ENCODE measurements at regions of chr4 and their contacts with region 1.

Region 1: GRCh38 chr4:142353149-142353738 is 492.9 kb downstream of the INPP4B start:
- DNase-seq: no peak
- ATAC-seq: peak; percentile 20
- H3K4me3 Mint-ChIP-seq: peak overlapping the region; percentile 37
- H3K27ac Mint-ChIP-seq: peak overlapping the region; percentile 97
- H3K4me1 Mint-ChIP-seq: peaks cover 97% of the 10 kb centered on the region
- H3K27me3 Mint-ChIP-seq: no peaks in the 10 kb centered on the region

Region 2: GRCh38 chr4:141614878-141615586 is 738.2 kb before region 1 on chr4:
- CTCF ChIA-PET with region 1: no interaction called
- POLR2A ChIA-PET with region 1: no interaction called
- intact Hi-C with region 1: no loop called
- DNase-seq: no peak
- ATAC-seq: no peak
- H3K4me3 Mint-ChIP-seq: no peak overlapping the region
- H3K27ac Mint-ChIP-seq: no peak overlapping the region
- H3K4me1 Mint-ChIP-seq: no peaks in the 10 kb centered on the region
- H3K27me3 Mint-ChIP-seq: peaks cover 3% of the 10 kb centered on the region

Region 3: GRCh38 chr4:142126890-142127497 is 226.2 kb before region 1 on chr4:
- CTCF ChIA-PET with region 1: no interaction called
- POLR2A ChIA-PET with region 1: no interaction called
- intact Hi-C with region 1: loop called (anchors 5 kb)
- DNase-seq: peak; percentile 75
- ATAC-seq: peak; percentile 74
- H3K4me3 Mint-ChIP-seq: no peak overlapping the region
- H3K27ac Mint-ChIP-seq: no peak overlapping the region
- H3K4me1 Mint-ChIP-seq: peaks cover 32% of the 10 kb centered on the region
- H3K27me3 Mint-ChIP-seq: no peaks in the 10 kb centered on the region

Region 4: GRCh38 chr4:142372530-142373260 is 19.5 kb after region 1 on chr4:
- CTCF ChIA-PET with region 1: interaction called, 94 read pairs
- POLR2A ChIA-PET with region 1: no interaction called
- intact Hi-C with region 1: loop called (anchors 1 to 2 kb)
- DNase-seq: no peak
- ATAC-seq: peak; percentile 21
- H3K4me3 Mint-ChIP-seq: peak overlapping the region; percentile 35
- H3K27ac Mint-ChIP-seq: peak overlapping the region; percentile 79
- H3K4me1 Mint-ChIP-seq: peaks cover 76% of the 10 kb centered on the region
- H3K27me3 Mint-ChIP-seq: no peaks in the 10 kb centered on the region

Region 5: GRCh38 chr4:142416711-142417275 is 63.5 kb after region 1 on chr4:
- CTCF ChIA-PET with region 1: interaction called, 10 read pairs
- POLR2A ChIA-PET with region 1: no interaction called
- intact Hi-C with region 1: no loop called
- DNase-seq: no peak
- ATAC-seq: peak; percentile 92
- H3K4me3 Mint-ChIP-seq: peak overlapping the region; percentile 57
- H3K27ac Mint-ChIP-seq: peak overlapping the region; percentile 98
- H3K4me1 Mint-ChIP-seq: peaks cover 81% of the 10 kb centered on the region
- H3K27me3 Mint-ChIP-seq: no peaks in the 10 kb centered on the region

Region 6: DNA sequence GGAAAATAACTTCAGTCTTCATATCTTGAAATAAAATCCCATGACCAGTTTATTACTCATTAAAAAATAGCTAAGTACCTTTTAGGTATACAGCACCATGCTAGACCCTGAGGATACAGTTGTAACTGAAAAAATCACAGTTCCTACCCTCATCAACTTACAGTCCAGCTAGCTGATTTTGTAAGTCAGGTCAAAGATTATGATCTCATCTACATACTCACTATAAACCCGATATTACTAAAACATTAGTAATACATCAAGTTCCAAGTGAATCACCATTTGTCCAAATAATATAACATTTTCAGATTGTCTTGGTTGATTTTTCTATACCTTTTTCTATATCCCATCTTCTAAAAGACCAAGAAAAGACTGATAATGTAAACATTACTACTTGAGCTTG is 158.9 kb after region 1 on chr4:
- CTCF ChIA-PET with region 1: no interaction called
- POLR2A ChIA-PET with region 1: no interaction called
- intact Hi-C with region 1: no loop called
- DNase-seq: no peak
- ATAC-seq: no peak
- H3K4me3 Mint-ChIP-seq: no peak overlapping the region
- H3K27ac Mint-ChIP-seq: no peak overlapping the region
- H3K4me1 Mint-ChIP-seq: no peaks in the 10 kb centered on the region
- H3K27me3 Mint-ChIP-seq: no peaks in the 10 kb centered on the region

Region 7: DNA sequence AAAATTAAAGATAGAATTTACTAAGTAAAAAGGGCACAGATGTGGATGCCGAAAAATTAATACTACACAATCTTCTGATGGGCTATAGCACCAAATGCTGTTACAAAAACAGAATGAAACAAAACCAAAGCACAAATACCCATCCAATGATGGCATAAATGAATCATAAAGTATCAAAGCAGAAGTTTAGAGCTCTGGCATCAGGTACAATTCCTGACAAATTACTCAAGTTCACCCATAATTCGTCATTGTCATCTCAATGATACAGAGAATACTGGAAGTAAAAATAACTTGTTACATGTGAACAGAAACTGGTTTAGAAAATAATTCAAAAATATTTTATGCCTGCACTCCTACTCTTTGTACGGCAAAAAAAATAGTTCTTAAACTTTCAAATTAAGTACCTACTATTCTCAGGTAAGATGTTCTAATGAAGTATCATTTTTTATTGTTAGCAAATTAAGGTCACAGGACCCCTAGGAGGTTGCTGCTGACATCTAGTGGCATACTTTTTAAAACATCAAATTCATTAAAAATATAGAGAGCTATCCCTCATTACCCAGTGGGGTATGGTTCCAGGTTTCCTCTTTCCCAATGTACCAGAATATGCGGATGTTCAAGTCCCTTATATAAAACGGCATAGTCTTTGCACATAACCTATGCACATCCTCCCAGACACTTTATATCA is 366.8 kb after region 1 on chr4:
- CTCF ChIA-PET with region 1: interaction called, 6 read pairs
- POLR2A ChIA-PET with region 1: interaction called, 3 read pairs
- intact Hi-C with region 1: loop called (anchors 2 to 5 kb)
- DNase-seq: no peak
- ATAC-seq: peak; percentile 70
- H3K4me3 Mint-ChIP-seq: no peak overlapping the region
- H3K27ac Mint-ChIP-seq: peak overlapping the region; percentile 47
- H3K4me1 Mint-ChIP-seq: peaks cover 34% of the 10 kb centered on the region
- H3K27me3 Mint-ChIP-seq: no peaks in the 10 kb centered on the region

Region 8: GRCh38 chr4:142840516-142841123 is 487.4 kb after region 1 on chr4:
- CTCF ChIA-PET with region 1: no interaction called
- POLR2A ChIA-PET with region 1: no interaction called
- intact Hi-C with region 1: loop called in 1 of 2 experiments (anchors 5 kb)
- DNase-seq: peak; percentile 8
- ATAC-seq: no peak
- H3K4me3 Mint-ChIP-seq: no peak overlapping the region
- H3K27ac Mint-ChIP-seq: no peak overlapping the region
- H3K4me1 Mint-ChIP-seq: peaks cover 31% of the 10 kb centered on the region
- H3K27me3 Mint-ChIP-seq: no peaks in the 10 kb centered on the region